ENCODE measurements at regions of chr12 and their contacts with region 1.

Region 1: DNA sequence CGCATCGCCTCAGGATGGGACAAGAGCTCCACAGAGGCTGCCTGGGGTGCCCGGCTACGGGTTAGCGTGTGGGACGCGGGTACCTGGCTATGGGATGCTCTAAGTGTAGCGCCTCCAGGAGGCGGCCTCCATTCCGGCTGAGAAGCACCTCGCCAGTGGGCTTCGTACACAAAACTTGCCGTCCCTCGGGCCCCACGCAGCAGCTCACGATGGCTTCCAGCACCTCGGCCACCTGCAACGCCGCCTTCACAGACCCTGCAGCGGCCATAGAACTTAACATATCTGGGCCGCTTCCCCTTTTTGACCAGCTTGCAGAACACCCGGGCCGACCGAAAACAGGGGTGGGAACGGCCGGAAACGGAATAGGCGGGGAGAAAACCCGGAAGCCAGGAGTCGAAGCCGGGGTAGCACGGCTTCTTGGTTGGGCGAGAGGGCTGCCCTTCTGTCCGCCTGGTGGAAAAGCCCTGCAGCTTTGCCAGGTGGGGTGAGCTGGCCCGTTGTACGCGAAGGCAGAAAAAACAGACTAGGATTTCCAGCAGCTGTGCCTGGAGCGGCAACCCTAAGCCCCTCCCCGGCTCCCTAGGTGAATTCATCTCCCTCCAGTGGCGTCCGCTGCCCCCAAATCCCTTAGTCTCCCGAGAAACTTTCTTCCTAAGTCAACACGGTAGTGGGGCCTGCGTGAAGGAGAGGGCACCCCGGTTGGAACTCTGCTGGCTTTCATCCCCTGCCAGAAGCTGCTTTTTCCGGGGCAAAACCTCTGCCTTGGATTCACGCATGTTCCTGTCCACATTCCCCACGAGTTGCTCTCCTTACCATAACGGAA is at the start of gene BBS10:
- DNase-seq: peak; percentile 92
- H3K4me3 ChIP-seq: peak within 1 kb of the TSS; percentile 85 to 93 (median 91)
- H3K27ac ChIP-seq: peak within 1 kb of the TSS; percentile 72
- H3K4me1 ChIP-seq: peaks cover 9% of the 10 kb centered on the region
- H3K27me3 ChIP-seq: no peaks in the 10 kb centered on the region
- CTCF ChIP-seq: peak; percentile 24 to 65
- total RNA-seq, gene BBS10: 7.6 to 10.7 TPM

Region 2: DNA sequence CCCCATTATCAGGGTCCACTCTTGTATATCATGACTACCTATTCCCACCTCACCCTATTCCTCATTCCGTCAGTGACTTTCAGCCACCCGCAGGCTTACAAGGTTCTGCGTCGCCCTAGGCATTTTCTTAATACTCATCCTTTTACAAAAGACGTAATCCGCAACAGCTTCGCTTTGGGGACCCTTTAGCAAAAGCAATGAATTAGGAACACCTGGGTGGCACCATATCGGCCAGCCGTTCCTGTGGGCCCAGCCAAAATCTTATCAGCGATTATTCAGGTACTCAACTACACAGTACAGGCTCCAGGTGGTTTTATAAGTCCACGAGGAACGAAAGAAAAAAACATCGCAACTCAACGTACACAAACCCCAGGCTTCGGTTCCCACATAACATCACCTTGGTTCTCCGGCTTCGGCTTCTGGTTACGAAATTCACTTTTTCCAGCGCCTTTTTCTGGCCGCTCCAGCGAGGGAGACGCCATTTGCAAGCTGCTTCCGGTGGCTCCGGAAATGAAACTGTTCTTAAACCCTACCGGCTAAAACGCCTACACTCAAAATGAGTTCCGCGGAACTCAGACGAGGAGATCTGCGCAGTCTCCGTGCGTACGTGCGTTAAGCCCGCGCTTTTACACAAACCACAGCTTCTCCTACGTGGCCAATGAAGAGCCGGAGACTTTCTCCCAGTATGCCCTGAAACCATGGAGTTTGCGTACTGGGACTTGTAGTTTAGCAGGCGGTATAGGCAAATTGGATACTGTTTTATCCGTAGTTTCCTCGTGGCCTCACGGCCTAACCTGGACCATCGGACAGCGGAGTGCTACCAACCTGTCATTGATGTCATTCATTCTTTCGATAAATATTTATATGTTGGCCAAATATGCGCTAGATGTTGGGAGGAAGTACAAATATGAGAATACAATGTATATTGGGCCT is 836.9 kb before region 1 on chr12 and contains the start of gene KRR1:
- CTCF ChIA-PET with region 1: no interaction called
- dilution Hi-C with region 1: no loop called
- in situ Hi-C with region 1: no loop called
- intact Hi-C with region 1: loop called (anchors 5 kb)
- DNase-seq: peak; percentile 98
- H3K4me3 ChIP-seq: peak within 1 kb of the TSS; percentile 60 to 84 (median 79)
- H3K27ac ChIP-seq: peak within 1 kb of the TSS; percentile 93
- H3K4me1 ChIP-seq: peaks cover 19% of the 10 kb centered on the region
- H3K27me3 ChIP-seq: no peaks in the 10 kb centered on the region
- CTCF ChIP-seq: no peak
- total RNA-seq, gene KRR1: 36.7 to 99.1 TPM

Region 3: DNA sequence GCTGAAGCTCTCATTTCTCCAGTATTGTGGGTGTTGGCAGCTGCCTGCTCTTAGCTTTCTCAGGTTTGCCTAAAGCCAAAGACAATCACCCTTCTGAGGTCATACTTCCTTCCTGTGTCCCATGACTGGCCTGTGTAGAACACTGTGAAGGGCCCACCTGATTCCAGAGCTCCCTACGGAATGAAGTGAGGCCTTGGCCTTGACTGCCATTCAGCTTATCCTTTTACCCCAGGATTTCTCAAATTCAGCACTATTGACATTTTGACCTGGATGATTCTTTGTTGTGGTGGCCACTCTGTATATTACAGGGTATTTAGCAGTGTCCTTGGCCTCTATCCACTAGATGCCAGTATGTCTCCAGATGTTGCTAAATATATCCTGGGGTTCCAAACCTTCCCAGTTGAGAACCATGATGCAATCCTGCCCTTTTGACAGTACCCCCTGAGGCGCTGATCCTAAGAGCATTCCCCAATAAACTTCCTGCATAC is 724.6 kb before region 1 on chr12:
- CTCF ChIA-PET with region 1: no interaction called
- dilution Hi-C with region 1: no loop called
- in situ Hi-C with region 1: no loop called
- intact Hi-C with region 1: loop called (anchors 5 kb)
- DNase-seq: peak; percentile 53
- H3K4me3 ChIP-seq: no peak overlapping the region
- H3K27ac ChIP-seq: peak overlapping the region; percentile 18
- H3K4me1 ChIP-seq: peaks cover 9% of the 10 kb centered on the region
- H3K27me3 ChIP-seq: no peaks in the 10 kb centered on the region
- CTCF ChIP-seq: peak; percentile 30 to 60

Region 4: GRCh38 chr12:75969768-75970167 is 378.5 kb before region 1 on chr12:
- CTCF ChIA-PET with region 1: no interaction called
- dilution Hi-C with region 1: no loop called
- in situ Hi-C with region 1: no loop called
- intact Hi-C with region 1: no loop called
- DNase-seq: no peak
- H3K4me3 ChIP-seq: no peak overlapping the region
- H3K27ac ChIP-seq: no peak overlapping the region
- H3K4me1 ChIP-seq: peaks cover 8% of the 10 kb centered on the region
- H3K27me3 ChIP-seq: no peaks in the 10 kb centered on the region
- CTCF ChIP-seq: no peak

Region 5: GRCh38 chr12:76064904-76065303 is 283.4 kb before region 1 on chr12:
- CTCF ChIA-PET with region 1: no interaction called
- dilution Hi-C with region 1: no loop called
- in situ Hi-C with region 1: loop called (anchors 10 kb)
- intact Hi-C with region 1: loop called (anchors 5 kb)
- DNase-seq: no peak
- H3K4me3 ChIP-seq: no peak overlapping the region
- H3K27ac ChIP-seq: no peak overlapping the region
- H3K4me1 ChIP-seq: no peaks in the 10 kb centered on the region
- H3K27me3 ChIP-seq: no peaks in the 10 kb centered on the region
- CTCF ChIP-seq: no peak

Region 6: GRCh38 chr12:76183459-76184186 is 164.7 kb before region 1 on chr12:
- CTCF ChIA-PET with region 1: no interaction called
- dilution Hi-C with region 1: no loop called
- in situ Hi-C with region 1: no loop called
- intact Hi-C with region 1: loop called (anchors 10 kb)
- DNase-seq: peak; percentile 97
- H3K4me3 ChIP-seq: no peak overlapping the region
- H3K27ac ChIP-seq: peak overlapping the region; percentile 4
- H3K4me1 ChIP-seq: peaks cover 14% of the 10 kb centered on the region
- H3K27me3 ChIP-seq: no peaks in the 10 kb centered on the region
- CTCF ChIP-seq: no peak

Region 7: GRCh38 chr12:76318773-76319730 is 29.2 kb before region 1 on chr12:
- CTCF ChIA-PET with region 1: no interaction called
- dilution Hi-C with region 1: no loop called
- in situ Hi-C with region 1: no loop called
- intact Hi-C with region 1: no loop called
- DNase-seq: no peak
- H3K4me3 ChIP-seq: no peak overlapping the region
- H3K27ac ChIP-seq: no peak overlapping the region
- H3K4me1 ChIP-seq: no peaks in the 10 kb centered on the region
- H3K27me3 ChIP-seq: no peaks in the 10 kb centered on the region
- CTCF ChIP-seq: no peak

Region 8: DNA sequence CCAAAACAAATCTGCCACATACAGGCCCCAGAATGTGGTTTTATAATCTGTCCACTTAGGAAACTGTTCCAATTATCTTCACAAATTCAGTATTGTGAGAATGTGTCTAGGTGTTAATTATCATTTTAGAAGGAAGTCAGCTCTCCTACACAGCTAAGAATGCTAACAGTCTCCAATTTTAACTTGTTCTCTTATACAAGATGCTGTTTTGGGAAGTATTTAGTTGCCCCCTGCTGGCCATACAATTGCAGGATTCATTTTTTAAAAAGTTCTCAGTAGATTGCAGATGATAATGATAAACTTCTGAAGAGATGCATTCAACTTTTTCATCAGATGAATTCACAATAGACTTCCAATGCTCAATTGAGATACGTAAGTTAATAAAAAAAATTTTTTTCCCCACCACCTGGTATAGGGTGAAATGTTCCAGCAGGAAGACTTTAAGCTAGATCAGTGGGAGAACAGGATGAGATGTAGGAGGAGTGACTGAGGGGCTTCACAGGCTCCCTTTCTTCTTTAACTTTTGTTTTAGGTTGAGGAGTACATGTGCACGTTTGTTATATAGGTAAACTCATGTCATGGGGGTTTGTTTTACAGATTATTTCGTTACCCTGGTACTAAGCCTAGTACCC is 238.6 kb after region 1 on chr12:
- CTCF ChIA-PET with region 1: interaction called, 3 read pairs
- dilution Hi-C with region 1: no loop called
- in situ Hi-C with region 1: no loop called
- intact Hi-C with region 1: loop called (anchors 1 kb)
- DNase-seq: peak; percentile 43
- H3K4me3 ChIP-seq: no peak overlapping the region
- H3K27ac ChIP-seq: no peak overlapping the region
- H3K4me1 ChIP-seq: peaks cover 7% of the 10 kb centered on the region
- H3K27me3 ChIP-seq: no peaks in the 10 kb centered on the region
- CTCF ChIP-seq: peak; percentile 73 to 74